Activated CD4-positive, alpha-beta T cell treated with anti-CD3 and anti-CD28 coated beads, Interleukin-2, amount 10 ng/mL, durations not matched to agents 24 days and 14 days (primary cell): ENCODE measurements at regions of chr2 and their contacts with region 1.

Region 1: GRCh38 chr2:38665854-38666555 is at the start of gene GALM:
- DNase-seq: peak; percentile 88
- H3K4me3 Mint-ChIP-seq: peak within 1 kb of the TSS; percentile 97
- H3K27ac Mint-ChIP-seq: peak within 1 kb of the TSS; percentile 99
- H3K4me1 Mint-ChIP-seq: peaks cover 57% of the 10 kb centered on the region
- H3K27me3 Mint-ChIP-seq: no peaks in the 10 kb centered on the region
- total RNA-seq, gene GALM: 56.0 and 57.4 TPM in 2 replicates

Region 2: GRCh38 chr2:38610851-38611801 is 54.9 kb before region 1 on chr2:
- intact Hi-C with region 1: loop called (anchors 1 kb)
- DNase-seq: no peak
- H3K4me3 Mint-ChIP-seq: no peak overlapping the region
- H3K27ac Mint-ChIP-seq: no peak overlapping the region
- H3K4me1 Mint-ChIP-seq: peaks cover 42% of the 10 kb centered on the region
- H3K27me3 Mint-ChIP-seq: no peaks in the 10 kb centered on the region

Region 3: DNA sequence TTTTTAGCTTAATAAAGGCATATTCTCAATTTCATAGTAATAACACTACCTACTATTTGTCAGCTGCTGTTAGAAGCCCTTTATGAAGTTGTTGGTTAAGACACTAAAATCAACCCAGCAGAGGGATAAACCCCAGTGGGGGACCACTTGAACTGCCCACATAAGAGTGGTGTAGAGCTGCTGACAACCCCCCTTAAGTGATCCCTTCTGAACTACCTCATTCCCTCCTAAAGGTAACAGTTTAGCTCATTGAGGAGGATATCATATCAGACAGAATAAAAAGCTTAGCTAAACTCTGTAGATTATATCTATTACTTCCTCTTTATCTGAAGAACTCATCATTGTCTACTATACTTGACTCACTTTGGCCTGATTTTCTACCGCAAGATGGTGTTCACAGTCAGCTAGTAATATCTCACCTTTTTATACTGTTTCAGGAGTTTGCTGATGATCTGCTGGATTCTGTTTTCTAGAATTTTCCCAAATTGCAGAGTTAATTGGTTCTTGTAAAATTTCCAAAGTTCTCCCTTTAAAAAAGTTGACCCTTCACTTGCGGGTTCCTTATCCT is 16.1 kb after region 1 on chr2:
- intact Hi-C with region 1: loop called (anchors 1 kb)
- DNase-seq: no peak
- H3K4me3 Mint-ChIP-seq: peak overlapping the region; percentile 61
- H3K27ac Mint-ChIP-seq: peak overlapping the region; percentile 79
- H3K4me1 Mint-ChIP-seq: peaks cover 52% of the 10 kb centered on the region
- H3K27me3 Mint-ChIP-seq: no peaks in the 10 kb centered on the region

Region 4: DNA sequence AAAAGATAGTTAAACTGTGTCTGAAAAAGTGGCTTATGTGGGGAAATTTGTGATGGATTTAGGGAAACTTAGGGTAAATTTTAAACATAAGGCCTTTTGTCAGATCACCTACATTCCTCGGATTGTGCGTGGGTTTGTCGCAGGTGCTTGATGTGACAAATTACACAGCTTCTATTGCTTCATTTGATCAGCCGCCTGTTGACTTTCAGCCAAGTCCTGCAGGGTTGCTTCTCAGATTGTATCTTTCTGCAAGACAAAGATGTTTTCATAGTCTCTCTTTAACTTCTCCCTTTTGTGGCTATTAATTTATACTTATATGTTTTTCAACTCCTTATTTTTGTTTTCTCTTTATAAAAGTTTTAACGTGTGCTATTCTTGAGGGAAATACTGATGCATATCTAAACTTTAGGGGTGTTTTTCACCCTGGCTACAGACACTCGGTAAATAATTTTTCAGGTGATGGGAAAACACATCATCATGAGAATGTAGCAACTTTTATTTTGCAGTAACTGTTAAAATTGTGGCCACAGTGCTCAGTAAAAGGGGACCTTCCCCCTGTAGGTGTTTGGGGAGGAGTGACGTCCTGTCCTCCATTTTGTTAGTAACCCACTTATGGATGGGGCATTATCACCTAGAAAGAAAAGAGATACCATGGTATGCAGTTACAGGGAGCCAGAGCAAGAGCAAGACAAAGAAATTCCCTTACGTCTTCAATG is 31.3 kb after region 1 on chr2:
- intact Hi-C with region 1: loop called (anchors 2 kb)
- DNase-seq: no peak
- H3K4me3 Mint-ChIP-seq: no peak overlapping the region
- H3K27ac Mint-ChIP-seq: peak overlapping the region; percentile 81
- H3K4me1 Mint-ChIP-seq: peaks cover 58% of the 10 kb centered on the region
- H3K27me3 Mint-ChIP-seq: no peaks in the 10 kb centered on the region